Ovary (tissue), 10 donors: ENCODE measurements at regions of chr7 and their contacts with region 1.

Region 1: DNA sequence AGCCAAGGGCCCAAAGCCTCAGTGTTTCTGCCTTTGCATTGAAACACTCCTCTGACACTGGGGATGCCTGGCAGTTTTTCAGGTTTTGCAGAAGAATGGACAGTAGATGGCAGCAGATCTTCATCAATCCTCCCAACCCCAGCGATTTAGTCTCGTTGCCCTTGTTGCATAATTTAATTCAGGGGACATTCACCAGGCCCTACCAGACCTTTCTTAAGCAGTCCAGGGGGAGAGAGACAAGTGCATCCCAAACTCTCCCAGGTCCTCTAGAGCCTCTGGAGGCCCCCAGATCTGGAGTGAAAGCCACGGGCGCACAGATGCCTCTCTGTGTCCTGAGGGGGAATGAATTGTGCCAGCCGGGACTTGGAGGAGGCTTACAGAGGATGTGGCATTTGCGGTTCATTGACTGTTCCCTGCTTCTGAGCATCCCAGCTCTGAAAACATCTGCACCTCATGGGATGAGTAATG is 29.6 kb downstream of the MINDY4 start:
- DNase-seq: peak in 4 of 5 donors; percentile 47 to 75 (median 52)
- H3K4me3 ChIP-seq: no peak overlapping the region
- H3K27ac ChIP-seq: no peak overlapping the region
- H3K4me1 ChIP-seq: peaks cover 7% of the 10 kb centered on the region
- H3K27me3 ChIP-seq: no peaks in the 10 kb centered on the region
- CTCF ChIP-seq: peak; percentile 54 to 77 (median 61)
- EP300 ChIP-seq: no peak
- POLR2A ChIP-seq: no peak

Region 2: GRCh38 chr7:30974605-30975255 is 173.9 kb after region 1 on chr7:
- intact Hi-C with region 1: loop called in 1 of 4 experiments (anchors 10 kb)
- DNase-seq: peak in 1 of 5 donors; percentile 40
- H3K4me3 ChIP-seq: no peak overlapping the region
- H3K27ac ChIP-seq: no peak overlapping the region
- H3K4me1 ChIP-seq: no peaks in the 10 kb centered on the region
- H3K27me3 ChIP-seq: no peaks in the 10 kb centered on the region
- CTCF ChIP-seq: no peak
- EP300 ChIP-seq: no peak
- POLR2A ChIP-seq: no peak

Region 3: GRCh38 chr7:31160941-31161340 is 360.1 kb after region 1 on chr7:
- intact Hi-C with region 1: no loop called
- DNase-seq: no peak
- H3K4me3 ChIP-seq: no peak overlapping the region
- H3K27ac ChIP-seq: no peak overlapping the region
- H3K4me1 ChIP-seq: no peaks in the 10 kb centered on the region
- H3K27me3 ChIP-seq: no peaks in the 10 kb centered on the region
- CTCF ChIP-seq: no peak
- EP300 ChIP-seq: no peak
- POLR2A ChIP-seq: no peak